PC-9 (cell line): ENCODE measurements at regions of chr1 and their contacts with region 1.

Region 1: GRCh38 chr1:232029315-232029714 is 402.7 kb downstream of the DISC1 start:
- DNase-seq: no peak
- H3K4me3 ChIP-seq: no peak overlapping the region
- H3K27ac ChIP-seq: no peak overlapping the region
- H3K4me1 ChIP-seq: no peaks in the 10 kb centered on the region
- H3K27me3 ChIP-seq: no peaks in the 10 kb centered on the region
- CTCF ChIP-seq: no peak

Region 2: DNA sequence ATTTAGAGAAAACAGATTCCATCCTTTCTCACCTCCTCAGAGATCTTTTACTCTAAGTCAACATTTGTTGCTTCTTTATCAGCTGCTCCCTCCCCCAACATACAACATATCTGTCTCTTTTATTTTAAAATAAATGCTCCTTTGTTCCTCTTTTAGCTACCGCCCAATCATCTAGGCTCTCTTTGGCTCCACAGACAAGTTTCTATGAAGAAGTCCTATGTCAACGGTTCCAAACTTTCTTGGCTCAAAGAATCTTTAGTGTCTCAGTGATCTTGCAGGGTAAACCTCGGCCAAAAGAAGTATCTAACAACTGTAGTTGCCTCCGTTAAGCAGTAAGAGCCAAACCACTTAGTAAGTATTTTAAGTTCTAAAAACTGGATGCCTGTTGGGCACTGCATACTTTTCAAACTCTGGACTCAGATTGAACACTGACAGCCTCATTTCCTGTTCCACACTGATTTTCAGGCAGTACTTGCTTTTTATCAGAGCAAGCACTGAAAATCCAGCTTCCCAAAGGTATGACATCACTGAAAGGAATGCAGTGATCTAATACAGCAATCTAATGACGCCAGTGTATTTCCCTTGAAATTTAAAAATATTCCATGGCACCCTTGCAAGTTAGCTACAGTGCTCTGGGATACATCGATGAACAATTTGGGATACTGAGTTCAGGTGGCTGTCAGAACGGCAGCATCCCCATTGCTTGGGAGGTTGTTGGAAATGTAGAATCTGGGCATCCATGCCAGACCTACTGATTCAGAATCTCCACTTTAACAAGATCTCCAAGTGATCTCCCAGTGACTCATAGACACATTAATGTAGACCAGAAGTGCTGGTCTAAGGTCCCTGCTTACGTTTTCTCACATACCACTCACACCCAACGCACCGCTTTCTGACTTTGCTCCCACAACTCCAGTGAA is 634.0 kb before region 1 on chr1:
- CTCF ChIA-PET with region 1: no interaction called
- POLR2A ChIA-PET with region 1: interaction called, 16 read pairs
- intact Hi-C with region 1: no loop called
- DNase-seq: peak; percentile 43 to 84
- H3K4me3 ChIP-seq: peak overlapping the region; percentile 33; the same call in 1 of the 2 replicates
- H3K27ac ChIP-seq: peak overlapping the region; percentile 79
- H3K4me1 ChIP-seq: peaks cover 34% of the 10 kb centered on the region
- H3K27me3 ChIP-seq: no peaks in the 10 kb centered on the region
- CTCF ChIP-seq: no peak